ENCODE measurements at regions of chr3 and their contacts with region 1.

Region 1: GRCh38 chr3:122415720-122416654 is at the start of gene WDR5B:
- DNase-seq: peak; percentile 98
- ATAC-seq: peak; percentile 95
- H3K4me3 ChIP-seq: peak within 1 kb of the TSS; percentile 77
- H3K27ac ChIP-seq: peak within 1 kb of the TSS; percentile 91
- H3K4me1 ChIP-seq: peaks cover 14% of the 10 kb centered on the region; the same call in 1 of the 2 replicates
- H3K27me3 ChIP-seq: no peaks in the 10 kb centered on the region
- CTCF ChIP-seq: no peak; a peak in 1 of 6 replicates
- EP300 ChIP-seq: peak; percentile 33 to 43; a peak in 1 of 4 replicates
- POLR2A ChIP-seq: peak; percentile 93
- RAD21 ChIP-seq: no peak
- polyA plus RNA-seq, gene WDR5B: 1.7 to 2.4 TPM

Region 2: GRCh38 chr3:122112754-122113153 is 303.2 kb before region 1 on chr3:
- CTCF ChIA-PET with region 1: no interaction called
- POLR2A ChIA-PET with region 1: no interaction called
- RAD21 ChIA-PET with region 1: no interaction called
- SMC1A ChIA-PET with region 1: no interaction called
- in situ Hi-C with region 1: no loop called
- intact Hi-C with region 1: no loop called
- DNase-seq: no peak
- ATAC-seq: peak; percentile 71; the same call in 2 of the 3 replicates
- H3K4me3 ChIP-seq: no peak overlapping the region
- H3K27ac ChIP-seq: no peak overlapping the region
- H3K4me1 ChIP-seq: peaks cover 8% of the 10 kb centered on the region; the same call in 1 of the 2 replicates
- H3K27me3 ChIP-seq: no peaks in the 10 kb centered on the region
- CTCF ChIP-seq: no peak
- EP300 ChIP-seq: no peak
- POLR2A ChIP-seq: no peak
- RAD21 ChIP-seq: no peak

Region 3: DNA sequence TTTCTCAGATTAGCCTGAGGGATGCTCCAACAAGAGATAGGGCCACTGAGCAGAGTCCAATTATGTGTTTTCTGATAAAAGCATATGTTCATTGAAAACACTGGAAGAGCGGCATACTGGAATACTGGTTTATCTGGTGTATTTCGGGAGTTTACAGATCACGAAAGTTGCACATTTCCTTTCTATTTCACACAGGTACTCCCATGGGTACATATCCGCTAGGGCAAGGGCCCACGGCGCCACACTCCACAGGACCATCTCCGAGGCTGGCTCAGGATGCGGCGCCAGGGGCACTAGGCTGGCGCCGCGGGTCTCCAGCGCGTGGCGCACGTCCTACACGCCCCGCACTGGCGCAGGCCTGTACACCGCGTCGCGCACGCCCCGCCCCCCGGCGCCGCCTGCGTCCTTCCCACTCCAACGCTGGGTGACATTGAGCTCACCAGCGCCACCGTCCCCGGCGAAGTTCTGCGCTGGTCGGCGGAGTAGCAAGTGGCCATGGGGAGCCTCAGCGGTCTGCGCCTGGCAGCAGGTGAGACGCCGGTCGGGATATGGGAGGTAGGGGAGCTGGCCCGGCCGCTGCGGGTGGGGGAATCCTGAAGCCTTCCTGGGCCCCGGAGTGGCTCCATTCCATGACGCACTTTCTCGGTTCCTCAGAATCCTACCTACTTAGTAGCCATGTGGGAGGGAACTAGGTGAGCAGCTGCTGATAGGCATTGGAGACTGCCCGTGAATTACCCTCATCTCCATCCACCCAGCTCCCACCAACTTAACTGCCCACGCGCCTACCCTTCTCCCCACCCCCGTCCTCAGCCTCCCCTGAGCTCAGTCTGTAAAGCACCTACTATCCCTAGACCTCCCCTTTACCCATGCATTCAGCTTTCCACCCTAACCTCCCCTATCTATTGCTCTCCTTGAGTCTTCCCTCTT is 32.0 kb before region 1 on chr3 and contains the start of gene FAM162A:
- CTCF ChIA-PET with region 1: interaction called, 10 read pairs
- POLR2A ChIA-PET with region 1: interaction called, 12 read pairs
- RAD21 ChIA-PET with region 1: interaction called, 20 read pairs
- SMC1A ChIA-PET with region 1: interaction called, 70 read pairs
- in situ Hi-C with region 1: no loop called
- intact Hi-C with region 1: no loop called
- DNase-seq: peak; percentile 83
- ATAC-seq: peak; percentile 95
- H3K4me3 ChIP-seq: peak within 1 kb of the TSS; percentile 76
- H3K27ac ChIP-seq: peak within 1 kb of the TSS; percentile 82
- H3K4me1 ChIP-seq: peaks cover 16% of the 10 kb centered on the region
- H3K27me3 ChIP-seq: no peaks in the 10 kb centered on the region
- CTCF ChIP-seq: peak; percentile 55 to 77 (median 61); a peak in 5 of 6 replicates
- EP300 ChIP-seq: peak in 1 of 2 experiments; percentile 8; a peak in 1 of 4 replicates
- POLR2A ChIP-seq: peak; percentile 96
- RAD21 ChIP-seq: peak; percentile 38
- polyA plus RNA-seq, gene FAM162A: 290 to 297 TPM

Region 4: GRCh38 chr3:122403489-122403888 is 12.5 kb before region 1 on chr3:
- CTCF ChIA-PET with region 1: interaction called, 4 read pairs
- POLR2A ChIA-PET with region 1: interaction called, 16 read pairs
- RAD21 ChIA-PET with region 1: interaction called, 8 read pairs
- SMC1A ChIA-PET with region 1: interaction called, 8 read pairs
- in situ Hi-C with region 1: no loop called
- intact Hi-C with region 1: no loop called
- DNase-seq: no peak
- ATAC-seq: no peak
- H3K4me3 ChIP-seq: no peak overlapping the region
- H3K27ac ChIP-seq: no peak overlapping the region
- H3K4me1 ChIP-seq: no peaks in the 10 kb centered on the region
- H3K27me3 ChIP-seq: no peaks in the 10 kb centered on the region
- CTCF ChIP-seq: no peak
- EP300 ChIP-seq: no peak
- POLR2A ChIP-seq: no peak
- RAD21 ChIP-seq: no peak

Measured in GM12878 (cell line).